ENCODE measurements at regions of chr16 and their contacts with region 1.

Region 1: GRCh38 chr16:28823872-28824716 is 1.3 kb downstream of the ATXN2L start:
- DNase-seq: peak; percentile 88 to 98 (median 94)
- ATAC-seq: peak; percentile 60
- H3K4me3 ChIP-seq: peak overlapping the region; percentile 90
- H3K4me3 Mint-ChIP-seq: peak overlapping the region; percentile 100
- H3K27ac ChIP-seq: peak overlapping the region; percentile 95 to 98
- H3K27ac Mint-ChIP-seq: peak overlapping the region; percentile 99
- H3K4me1 ChIP-seq: peaks cover 31% of the 10 kb centered on the region
- H3K4me1 Mint-ChIP-seq: peaks cover 50% of the 10 kb centered on the region
- H3K27me3 ChIP-seq: no peaks in the 10 kb centered on the region
- H3K27me3 Mint-ChIP-seq: no peaks in the 10 kb centered on the region
- CTCF ChIP-seq: peak; percentile 13

Region 2: DNA sequence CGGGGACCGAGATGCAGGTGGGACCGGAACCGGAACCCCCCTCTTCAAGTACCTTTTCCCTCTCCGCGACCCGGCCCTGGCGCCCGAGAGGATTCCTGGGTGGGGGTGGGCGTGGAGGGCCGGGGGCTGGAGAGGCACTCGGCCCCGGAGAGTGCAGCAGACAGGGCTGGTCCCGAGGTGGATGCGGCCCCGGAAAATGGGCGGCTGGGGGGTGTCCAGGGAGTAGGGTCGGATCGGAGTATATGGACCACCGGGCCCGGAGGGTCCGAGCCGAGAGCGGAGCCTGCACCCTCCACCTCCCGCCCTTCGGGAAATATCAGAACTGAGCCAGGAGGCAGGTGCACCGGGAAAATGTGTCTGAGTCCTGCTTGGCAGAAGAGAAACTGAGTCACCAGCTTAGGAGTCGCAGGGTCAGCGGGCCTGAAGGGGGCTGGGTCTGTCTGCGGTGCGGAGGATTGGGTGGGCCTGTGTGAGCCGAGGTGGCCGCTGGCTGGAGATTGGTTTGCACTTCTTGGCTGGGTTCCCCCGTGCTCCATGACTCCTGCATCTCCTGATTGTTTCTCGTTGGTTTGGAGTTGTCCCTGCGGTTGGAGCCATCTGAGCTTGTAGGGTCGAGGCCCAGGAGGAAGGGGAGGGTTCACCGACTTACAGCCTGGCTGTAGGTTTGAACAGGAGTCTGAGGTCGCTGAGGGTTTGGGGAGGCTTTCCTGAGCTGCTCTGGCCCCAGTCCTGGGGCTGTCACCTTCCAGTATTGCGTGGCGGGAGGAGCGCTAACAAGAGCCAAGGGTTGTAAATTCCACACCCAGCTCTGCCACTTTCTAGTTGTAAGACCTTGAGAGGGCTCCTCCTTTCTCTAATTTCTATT is 40.1 kb after region 1 on chr16:
- CTCF ChIA-PET with region 1: interaction called, 7 read pairs
- POLR2A ChIA-PET with region 1: interaction called, 49 read pairs
- intact Hi-C with region 1: loop called in 1 of 2 experiments (anchors 1 kb)
- DNase-seq: peak in 5 of 14 experiments; percentile 12 to 69 (median 30)
- ATAC-seq: peak; percentile 2
- H3K4me3 ChIP-seq: peak overlapping the region; percentile 97
- H3K4me3 Mint-ChIP-seq: peak overlapping the region; percentile 95
- H3K27ac ChIP-seq: peak overlapping the region; percentile 90 to 96
- H3K27ac Mint-ChIP-seq: peak overlapping the region; percentile 95
- H3K4me1 ChIP-seq: peaks cover 19% of the 10 kb centered on the region
- H3K4me1 Mint-ChIP-seq: peaks cover 30% of the 10 kb centered on the region
- H3K27me3 ChIP-seq: no peaks in the 10 kb centered on the region
- H3K27me3 Mint-ChIP-seq: no peaks in the 10 kb centered on the region
- CTCF ChIP-seq: no peak

Region 3: GRCh38 chr16:28879841-28880588 is 55.9 kb after region 1 on chr16:
- CTCF ChIA-PET with region 1: no interaction called
- POLR2A ChIA-PET with region 1: interaction called, 12 read pairs
- intact Hi-C with region 1: no loop called
- DNase-seq: peak; percentile 80 to 92 (median 87)
- ATAC-seq: peak; percentile 98
- H3K4me3 ChIP-seq: peak overlapping the region; percentile 95
- H3K4me3 Mint-ChIP-seq: peak overlapping the region; percentile 87
- H3K27ac ChIP-seq: no peak overlapping the region
- H3K27ac Mint-ChIP-seq: no peak overlapping the region
- H3K4me1 ChIP-seq: peaks cover 20% of the 10 kb centered on the region
- H3K4me1 Mint-ChIP-seq: peaks cover 8% of the 10 kb centered on the region
- H3K27me3 ChIP-seq: peaks cover 0 to 9% of the 10 kb centered on the region in 2 experiments
- H3K27me3 Mint-ChIP-seq: peaks cover 6% of the 10 kb centered on the region
- CTCF ChIP-seq: no peak

Region 4: GRCh38 chr16:28924732-28925385 is 100.8 kb after region 1 on chr16 and contains the start of gene RABEP2:
- CTCF ChIA-PET with region 1: no interaction called
- POLR2A ChIA-PET with region 1: interaction called, 33 read pairs
- intact Hi-C with region 1: loop called in 1 of 2 experiments (anchors 1 kb)
- DNase-seq: peak; percentile 88 to 97 (median 95)
- ATAC-seq: peak; percentile 79
- H3K4me3 ChIP-seq: peak within 1 kb of the TSS; percentile 92
- H3K4me3 Mint-ChIP-seq: peak within 1 kb of the TSS; percentile 91
- H3K27ac ChIP-seq: peak within 1 kb of the TSS; percentile 93 to 98
- H3K27ac Mint-ChIP-seq: peak within 1 kb of the TSS; percentile 97
- H3K4me1 ChIP-seq: peaks cover 14% of the 10 kb centered on the region
- H3K4me1 Mint-ChIP-seq: peaks cover 20% of the 10 kb centered on the region
- H3K27me3 ChIP-seq: no peaks in the 10 kb centered on the region
- H3K27me3 Mint-ChIP-seq: no peaks in the 10 kb centered on the region
- CTCF ChIP-seq: no peak
- total RNA-seq, gene RABEP2: 23.3 to 23.4 TPM

Region 5: GRCh38 chr16:28943281-28943680 is 119.2 kb after region 1 on chr16:
- CTCF ChIA-PET with region 1: interaction called, 5 read pairs
- POLR2A ChIA-PET with region 1: interaction called, 8 read pairs
- intact Hi-C with region 1: loop called in 1 of 2 experiments (anchors 2 kb)
- DNase-seq: no peak
- ATAC-seq: no peak
- H3K4me3 ChIP-seq: no peak overlapping the region
- H3K4me3 Mint-ChIP-seq: no peak overlapping the region
- H3K27ac ChIP-seq: no peak overlapping the region
- H3K27ac Mint-ChIP-seq: no peak overlapping the region
- H3K4me1 ChIP-seq: peaks cover 8% of the 10 kb centered on the region
- H3K4me1 Mint-ChIP-seq: peaks cover 11% of the 10 kb centered on the region
- H3K27me3 ChIP-seq: no peaks in the 10 kb centered on the region
- H3K27me3 Mint-ChIP-seq: no peaks in the 10 kb centered on the region
- CTCF ChIP-seq: no peak

Region 6: DNA sequence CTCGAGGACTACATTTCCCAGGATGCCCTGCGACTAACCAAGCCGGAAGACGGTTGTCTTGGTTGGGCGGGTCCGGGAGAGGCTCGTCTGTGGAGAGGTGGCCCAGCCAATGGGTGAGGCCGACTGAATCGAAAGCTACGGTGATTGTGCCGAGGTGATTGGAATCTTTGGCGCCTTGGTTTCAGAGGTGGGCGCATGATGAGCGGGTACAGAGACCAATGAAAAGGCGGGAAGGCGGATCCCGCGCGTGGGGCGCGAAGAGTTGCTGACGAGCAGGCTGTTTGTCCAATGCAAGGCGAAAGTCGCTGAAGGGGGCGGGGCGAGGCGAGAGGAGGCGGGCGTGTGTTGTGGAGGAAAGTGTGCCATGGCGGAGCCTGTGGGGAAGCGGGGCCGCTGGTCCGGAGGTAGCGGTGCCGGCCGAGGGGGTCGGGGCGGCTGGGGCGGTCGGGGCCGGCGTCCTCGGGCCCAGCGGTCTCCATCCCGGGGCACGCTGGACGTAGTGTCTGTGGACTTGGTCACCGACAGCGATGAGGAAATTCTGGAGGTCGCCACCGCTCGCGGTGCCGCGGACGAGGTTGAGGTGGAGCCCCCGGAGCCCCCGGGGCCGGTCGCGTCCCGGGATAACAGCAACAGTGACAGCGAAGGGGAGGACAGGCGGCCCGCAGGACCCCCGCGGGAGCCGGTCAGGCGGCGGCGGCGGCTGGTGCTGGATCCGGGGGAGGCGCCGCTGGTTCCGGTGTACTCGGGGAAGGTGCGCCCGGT is 126.7 kb after region 1 on chr16 and contains the start of gene NFATC2IP:
- CTCF ChIA-PET with region 1: interaction called, 5 read pairs
- POLR2A ChIA-PET with region 1: interaction called, 19 read pairs
- intact Hi-C with region 1: no loop called
- DNase-seq: peak; percentile 98 to 100 (median 99)
- ATAC-seq: peak; percentile 95
- H3K4me3 ChIP-seq: peak within 1 kb of the TSS; percentile 77
- H3K4me3 Mint-ChIP-seq: peak within 1 kb of the TSS; percentile 96
- H3K27ac ChIP-seq: peak within 1 kb of the TSS; percentile 36 to 63
- H3K27ac Mint-ChIP-seq: peak within 1 kb of the TSS; percentile 74
- H3K4me1 ChIP-seq: peaks cover 31% of the 10 kb centered on the region
- H3K4me1 Mint-ChIP-seq: peaks cover 28% of the 10 kb centered on the region
- H3K27me3 ChIP-seq: no peaks in the 10 kb centered on the region
- H3K27me3 Mint-ChIP-seq: no peaks in the 10 kb centered on the region
- CTCF ChIP-seq: no peak
- total RNA-seq, gene NFATC2IP: 47.4 to 51.0 TPM